IMR-90 (cell line): ENCODE measurements at regions of chr10 and their contacts with region 1.

Region 1: GRCh38 chr10:119933179-119933578 is 40.6 kb downstream of the SEC23IP start:
- DNase-seq: peak; percentile 3
- ATAC-seq: no peak
- H3K4me3 ChIP-seq: no peak overlapping the region
- H3K27ac ChIP-seq: no peak overlapping the region
- H3K4me1 ChIP-seq: no peaks in the 10 kb centered on the region
- H3K27me3 ChIP-seq: no peaks in the 10 kb centered on the region
- CTCF ChIP-seq: peak; percentile 23
- POLR2A ChIP-seq: no peak
- RAD21 ChIP-seq: 0 out of 2 replicates have a peak, but pooled peaks have one; percentile 19

Region 2: GRCh38 chr10:119058010-119058409 is 875.2 kb before region 1 on chr10:
- CTCF ChIA-PET with region 1: no interaction called
- POLR2A ChIA-PET with region 1: no interaction called
- dilution Hi-C with region 1: no loop called
- in situ Hi-C with region 1: no loop called
- intact Hi-C with region 1: loop called (anchors 5 kb)
- DNase-seq: no peak
- ATAC-seq: no peak
- H3K4me3 ChIP-seq: no peak overlapping the region
- H3K27ac ChIP-seq: no peak overlapping the region
- H3K4me1 ChIP-seq: no peaks in the 10 kb centered on the region
- H3K27me3 ChIP-seq: no peaks in the 10 kb centered on the region
- CTCF ChIP-seq: no peak
- POLR2A ChIP-seq: no peak
- RAD21 ChIP-seq: no peak

Region 3: GRCh38 chr10:119908166-119908565 is 25.0 kb before region 1 on chr10:
- CTCF ChIA-PET with region 1: no interaction called
- POLR2A ChIA-PET with region 1: interaction called, 10 read pairs
- dilution Hi-C with region 1: no loop called
- in situ Hi-C with region 1: no loop called
- intact Hi-C with region 1: no loop called
- DNase-seq: no peak
- ATAC-seq: no peak
- H3K4me3 ChIP-seq: no peak overlapping the region
- H3K27ac ChIP-seq: no peak overlapping the region
- H3K4me1 ChIP-seq: no peaks in the 10 kb centered on the region
- H3K27me3 ChIP-seq: no peaks in the 10 kb centered on the region
- CTCF ChIP-seq: no peak
- POLR2A ChIP-seq: no peak
- RAD21 ChIP-seq: no peak

Region 4: DNA sequence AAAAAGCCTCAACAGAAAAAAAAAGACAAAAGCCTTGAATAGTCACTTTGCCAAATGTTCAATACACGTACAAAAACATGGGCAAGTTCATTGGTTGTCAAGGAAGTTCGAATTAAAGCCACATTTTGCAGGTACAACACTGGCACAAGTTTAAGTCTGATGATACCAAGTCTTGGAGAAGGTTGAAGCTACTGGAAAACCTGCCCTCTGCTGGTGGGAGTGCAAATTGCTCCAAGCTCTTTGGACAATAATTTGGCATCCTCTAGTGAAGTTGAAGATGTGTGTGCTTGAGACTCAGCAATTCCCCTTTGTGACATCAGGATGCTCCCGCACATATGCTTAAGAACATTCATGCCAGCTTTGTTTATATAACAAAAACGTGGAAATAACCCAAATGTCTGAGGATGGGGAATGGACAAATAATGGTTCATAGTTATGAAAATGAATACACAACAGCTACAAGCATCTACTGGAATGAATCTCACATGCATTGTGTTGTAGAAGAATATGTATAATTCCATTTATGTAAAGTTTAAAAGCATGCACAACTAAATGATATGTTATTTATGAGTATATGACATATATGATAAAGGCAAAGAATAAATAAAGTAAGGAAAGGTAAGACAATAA is 403.8 kb after region 1 on chr10:
- CTCF ChIA-PET with region 1: no interaction called
- POLR2A ChIA-PET with region 1: no interaction called
- dilution Hi-C with region 1: no loop called
- in situ Hi-C with region 1: no loop called
- intact Hi-C with region 1: loop called (anchors 10 kb)
- DNase-seq: peak; percentile 11
- ATAC-seq: no peak
- H3K4me3 ChIP-seq: no peak overlapping the region
- H3K27ac ChIP-seq: no peak overlapping the region
- H3K4me1 ChIP-seq: no peaks in the 10 kb centered on the region
- H3K27me3 ChIP-seq: no peaks in the 10 kb centered on the region
- CTCF ChIP-seq: peak; percentile 42
- POLR2A ChIP-seq: no peak
- RAD21 ChIP-seq: peak; percentile 35; the same call in 1 of the 2 replicates

Region 5: DNA sequence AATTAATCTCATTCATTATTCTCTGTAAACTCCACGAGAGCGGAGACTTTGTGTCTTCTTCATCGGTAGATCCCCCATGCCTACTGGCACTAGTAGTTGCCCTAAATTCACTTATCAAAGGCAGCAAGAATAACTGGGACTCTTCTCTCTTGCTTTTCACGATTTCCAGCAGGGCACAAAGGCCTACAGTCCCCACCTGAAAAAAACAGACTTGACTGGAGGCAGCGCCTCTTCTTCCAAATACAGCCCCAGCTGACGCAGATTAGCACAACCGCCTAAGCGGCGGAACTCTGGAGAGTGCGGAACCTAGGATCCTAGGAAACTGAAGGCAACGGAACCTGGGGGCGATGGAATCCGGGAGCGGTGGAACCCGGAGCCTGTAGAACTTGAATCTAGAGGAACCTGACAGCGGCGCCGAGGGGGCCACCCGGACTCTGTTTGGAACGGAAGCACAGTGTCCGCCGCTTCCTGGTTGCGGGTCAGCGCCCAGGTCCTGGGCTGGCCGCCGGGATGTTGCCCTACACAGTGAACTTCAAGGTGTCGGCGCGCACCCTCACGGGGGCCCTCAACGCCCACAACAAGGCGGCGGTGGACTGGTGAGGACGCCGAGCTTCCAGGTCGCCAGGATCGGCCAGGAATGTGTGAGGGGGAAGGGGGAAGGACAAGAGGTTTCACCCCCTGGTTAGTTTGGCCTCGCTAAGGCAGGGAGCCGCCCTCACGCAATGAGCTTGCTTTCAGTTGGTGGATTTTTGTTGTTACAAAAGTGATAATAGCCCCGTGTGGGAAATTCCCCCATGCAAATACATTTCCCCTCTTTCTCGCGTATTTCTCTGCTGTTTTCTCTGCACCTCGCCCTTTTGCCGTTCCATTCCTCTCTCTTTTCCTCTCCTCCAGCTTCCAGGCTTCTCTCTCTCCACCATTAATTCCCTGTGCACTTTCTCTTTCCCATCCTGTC is 918.0 kb after region 1 on chr10 and contains the start of gene WDR11:
- CTCF ChIA-PET with region 1: no interaction called
- POLR2A ChIA-PET with region 1: no interaction called
- dilution Hi-C with region 1: no loop called
- in situ Hi-C with region 1: loop called (anchors 25 kb)
- intact Hi-C with region 1: loop called (anchors 10 kb)
- DNase-seq: peak; percentile 90
- ATAC-seq: peak; percentile 99
- H3K4me3 ChIP-seq: peak within 1 kb of the TSS; percentile 85
- H3K27ac ChIP-seq: peak within 1 kb of the TSS; percentile 82
- H3K4me1 ChIP-seq: 0 out of 2 replicates have a peak, but pooled peaks cover 1% of the 10 kb centered on the region
- H3K27me3 ChIP-seq: no peaks in the 10 kb centered on the region
- CTCF ChIP-seq: no peak
- POLR2A ChIP-seq: peak; percentile 75
- RAD21 ChIP-seq: 0 out of 2 replicates have a peak, but pooled peaks have one; percentile 13
- total RNA-seq, gene WDR11: 61.9 and 62.6 TPM in 2 replicates